Thyroid gland (tissue), 4 donors: ENCODE measurements at regions of chr3 and their contacts with region 1.

Region 1: DNA sequence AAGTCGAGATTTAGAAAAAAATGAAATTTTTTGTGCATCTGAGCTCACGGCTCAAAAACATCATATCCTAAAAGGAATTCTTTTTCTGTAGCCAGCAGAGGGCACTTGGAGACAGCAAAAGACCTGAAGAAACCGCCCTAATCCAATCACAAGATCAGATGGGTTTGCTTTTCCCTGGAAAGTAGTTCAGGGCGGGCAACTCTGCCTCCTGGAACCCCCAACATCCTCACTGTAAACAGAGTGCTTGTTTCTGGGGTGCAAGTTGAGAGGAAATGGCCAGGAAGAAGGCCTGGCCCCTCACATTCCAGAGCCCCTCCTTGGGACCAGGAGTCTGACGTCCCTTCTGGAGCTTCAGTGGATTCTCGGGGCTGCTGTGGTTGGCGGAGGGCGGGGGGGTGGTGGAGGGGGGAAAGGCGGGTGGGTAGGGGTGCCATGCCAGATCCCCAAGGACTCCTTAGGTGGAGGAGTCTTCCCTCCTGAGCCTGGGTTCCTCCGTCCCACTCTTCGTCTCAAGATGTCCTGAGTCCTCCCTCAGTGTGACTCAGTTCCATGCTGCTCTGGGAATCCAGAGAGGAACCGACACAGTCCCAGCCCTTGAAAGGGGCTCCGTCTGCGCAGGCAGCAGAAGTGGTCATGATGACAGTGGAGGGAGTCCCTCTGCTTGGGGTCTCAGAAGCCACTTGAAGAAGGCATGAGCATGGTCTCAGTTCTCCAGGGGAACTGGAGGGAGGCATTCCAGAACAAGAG is 35.9 kb downstream of the CCK start:
- DNase-seq: peak in 1 of 2 donors; percentile 9
- H3K4me3 ChIP-seq: no peak overlapping the region
- H3K27ac ChIP-seq: no peak overlapping the region
- H3K4me1 ChIP-seq: no peaks in the 10 kb centered on the region
- H3K27me3 ChIP-seq: no peaks in the 10 kb centered on the region
- CTCF ChIP-seq: peak in 4 of 6 experiments; percentile 24 to 58 (median 50)
- POLR2A ChIP-seq: no peak

Region 2: DNA sequence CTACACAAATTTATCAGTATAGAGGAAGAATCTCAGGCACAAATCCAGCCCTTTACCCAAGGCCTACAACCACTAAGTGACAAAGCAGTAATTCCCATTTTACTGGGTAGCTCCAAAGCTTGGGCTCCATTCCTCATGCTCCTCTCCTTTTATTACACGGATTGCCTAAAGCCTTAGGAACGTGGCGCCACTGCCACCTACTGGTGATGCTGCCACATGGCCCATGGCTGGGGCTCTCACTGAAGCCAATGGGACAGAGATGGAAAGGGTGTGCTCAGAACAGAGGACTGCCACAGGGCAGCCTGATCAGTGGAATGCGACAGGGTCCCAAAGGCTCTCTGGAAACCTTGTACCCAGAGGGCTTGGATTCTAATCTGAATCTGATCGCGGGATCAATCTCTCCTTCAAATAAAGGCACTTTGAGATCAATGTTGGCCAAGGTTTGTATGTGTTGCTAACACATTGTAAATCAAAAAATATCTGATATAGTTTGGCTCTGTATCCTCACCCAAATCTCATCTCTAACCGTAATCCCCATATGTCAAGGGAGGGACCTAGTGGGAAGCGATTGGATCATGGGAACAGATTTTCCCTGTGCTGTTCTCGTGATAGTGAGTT is 213.8 kb after region 1 on chr3:
- intact Hi-C with region 1: loop called (anchors 10 kb)
- DNase-seq: peak; percentile 75 to 85
- H3K4me3 ChIP-seq: no peak overlapping the region
- H3K27ac ChIP-seq: no peak overlapping the region
- H3K4me1 ChIP-seq: no peaks in the 10 kb centered on the region
- H3K27me3 ChIP-seq: no peaks in the 10 kb centered on the region
- CTCF ChIP-seq: peak; percentile 83 to 98 (median 89)
- POLR2A ChIP-seq: no peak